Aorta (tissue), 5 donors: ENCODE measurements at regions of chr2 and their contacts with region 1.

Region 1: DNA sequence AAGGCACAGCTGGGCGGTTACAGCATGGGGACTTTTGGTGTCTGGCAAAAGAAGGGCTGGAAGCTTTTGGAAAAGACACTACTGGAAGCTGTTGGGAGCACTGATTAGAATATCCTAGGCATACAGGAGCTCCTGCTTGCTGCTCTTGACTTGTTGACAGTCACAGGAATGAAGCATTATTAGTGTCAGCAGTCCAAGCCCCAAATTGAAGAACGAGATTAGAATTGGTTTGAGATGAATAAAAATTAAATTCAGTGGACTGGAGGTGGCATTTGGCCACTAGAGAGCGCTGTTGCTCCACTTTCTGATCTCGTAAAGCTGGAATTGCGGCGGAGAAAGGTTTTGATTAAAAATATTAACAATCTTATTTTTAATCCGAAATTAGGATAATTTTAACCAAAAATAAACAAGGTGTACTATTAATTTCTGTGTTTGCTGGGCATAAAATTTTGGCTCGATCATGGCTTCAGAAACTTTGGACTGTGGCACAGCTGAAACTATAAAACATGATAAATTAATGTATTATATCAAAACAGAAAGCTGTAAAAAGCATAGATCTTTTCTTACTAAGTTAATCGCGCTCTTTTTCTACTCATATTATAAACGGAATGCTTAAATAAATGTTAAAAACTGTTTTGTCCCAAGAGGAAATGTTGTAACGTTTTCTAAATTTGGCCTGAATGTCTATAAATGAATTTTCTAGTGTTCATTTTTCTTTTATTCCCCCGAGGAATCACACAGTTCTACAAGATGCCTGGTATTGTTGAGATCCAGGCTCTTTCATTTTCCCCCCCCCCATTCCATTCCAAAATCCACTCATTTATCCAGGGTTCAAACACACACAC is 2.4 kb upstream of the HOXD8 start:
- DNase-seq: peak; percentile 73 to 85
- ATAC-seq: no peak
- H3K4me3 ChIP-seq: no peak overlapping the region
- H3K27ac ChIP-seq: no peak overlapping the region
- H3K4me1 ChIP-seq: no peaks in the 10 kb centered on the region
- H3K27me3 ChIP-seq: no peaks in the 10 kb centered on the region

Region 2: DNA sequence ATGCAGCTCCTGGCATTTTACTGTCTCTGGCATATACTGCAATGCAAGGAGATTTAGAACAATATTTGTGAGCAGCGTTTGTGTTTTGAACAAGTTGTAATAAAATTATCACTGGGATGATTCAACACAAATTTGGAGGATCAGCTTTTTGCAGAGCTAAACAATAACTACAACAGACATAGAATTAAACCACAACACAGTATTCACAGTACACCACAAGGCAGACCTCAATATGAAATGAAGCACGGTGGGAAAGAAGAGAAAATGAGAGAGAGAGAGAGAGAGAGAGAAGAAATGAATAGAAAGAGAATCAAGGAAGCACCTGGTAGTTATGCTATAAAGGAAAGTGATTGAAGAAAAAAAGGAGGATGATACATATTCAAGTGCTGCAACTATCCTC is 100.7 kb after region 1 on chr2:
- intact Hi-C with region 1: no loop called
- DNase-seq: no peak
- ATAC-seq: no peak
- H3K4me3 ChIP-seq: no peak overlapping the region
- H3K27ac ChIP-seq: no peak overlapping the region
- H3K4me1 ChIP-seq: no peaks in the 10 kb centered on the region
- H3K27me3 ChIP-seq: no peaks in the 10 kb centered on the region

Region 3: DNA sequence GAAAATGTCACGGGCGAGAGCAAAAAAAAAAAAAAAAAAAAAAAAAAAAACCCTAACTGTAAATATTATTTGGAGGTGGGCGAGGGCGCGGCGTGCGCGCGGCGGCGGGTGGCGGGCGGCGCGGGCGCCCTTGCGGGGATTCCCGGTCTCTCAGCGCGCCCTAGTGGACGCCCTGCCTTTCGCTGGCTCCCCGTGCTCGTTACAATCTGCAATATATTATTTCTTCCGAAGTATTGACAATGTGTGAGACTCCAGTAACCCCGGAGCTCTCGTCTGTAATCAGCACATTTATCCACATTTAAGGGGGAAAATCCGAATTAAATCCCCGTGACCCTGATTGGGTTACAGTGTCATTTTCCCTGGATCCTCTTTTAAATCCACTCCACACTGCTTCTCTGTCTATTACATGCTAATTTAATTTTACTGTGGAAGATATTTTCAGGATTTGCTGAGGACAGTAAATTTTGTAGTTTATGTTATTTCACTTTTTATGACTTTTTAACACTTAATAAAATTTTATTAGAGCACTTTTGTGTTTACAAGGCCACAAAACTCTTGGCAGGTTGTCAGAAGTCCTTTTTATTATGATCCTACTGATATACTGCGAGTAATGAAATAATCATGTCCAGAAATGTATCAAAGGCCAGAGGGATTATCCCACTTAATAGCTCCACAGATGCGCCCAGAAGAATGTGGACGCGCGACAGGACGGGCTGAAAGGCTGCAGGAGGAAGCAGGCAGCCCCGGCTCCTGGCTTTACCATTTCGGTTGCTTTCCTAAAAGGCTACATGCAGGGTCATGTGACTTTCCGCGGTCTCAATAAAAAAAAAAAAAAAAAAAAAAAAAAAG is 511.2 kb after region 1 on chr2:
- intact Hi-C with region 1: loop called (anchors 2 kb)
- DNase-seq: peak; percentile 77 to 94
- ATAC-seq: peak; percentile 94
- H3K4me3 ChIP-seq: peak overlapping the region; percentile 80 to 81
- H3K27ac ChIP-seq: no peak overlapping the region
- H3K4me1 ChIP-seq: no peaks in the 10 kb centered on the region
- H3K27me3 ChIP-seq: no peaks in the 10 kb centered on the region

Region 4: GRCh38 chr2:176653479-176654443 is 526.6 kb after region 1 on chr2:
- intact Hi-C with region 1: loop called (anchors 1 to 2 kb)
- DNase-seq: peak; percentile 67 to 82
- ATAC-seq: peak; percentile 89
- H3K4me3 ChIP-seq: no peak overlapping the region
- H3K27ac ChIP-seq: no peak overlapping the region
- H3K4me1 ChIP-seq: no peaks in the 10 kb centered on the region
- H3K27me3 ChIP-seq: no peaks in the 10 kb centered on the region

Region 5: GRCh38 chr2:176814306-176815052 is 687.3 kb after region 1 on chr2:
- intact Hi-C with region 1: loop called (anchors 5 kb)
- DNase-seq: no peak
- ATAC-seq: peak; percentile 69
- H3K4me3 ChIP-seq: no peak overlapping the region
- H3K27ac ChIP-seq: no peak overlapping the region
- H3K4me1 ChIP-seq: peaks cover 0 to 6% of the 10 kb centered on the region in 2 donors
- H3K27me3 ChIP-seq: no peaks in the 10 kb centered on the region

Region 6: DNA sequence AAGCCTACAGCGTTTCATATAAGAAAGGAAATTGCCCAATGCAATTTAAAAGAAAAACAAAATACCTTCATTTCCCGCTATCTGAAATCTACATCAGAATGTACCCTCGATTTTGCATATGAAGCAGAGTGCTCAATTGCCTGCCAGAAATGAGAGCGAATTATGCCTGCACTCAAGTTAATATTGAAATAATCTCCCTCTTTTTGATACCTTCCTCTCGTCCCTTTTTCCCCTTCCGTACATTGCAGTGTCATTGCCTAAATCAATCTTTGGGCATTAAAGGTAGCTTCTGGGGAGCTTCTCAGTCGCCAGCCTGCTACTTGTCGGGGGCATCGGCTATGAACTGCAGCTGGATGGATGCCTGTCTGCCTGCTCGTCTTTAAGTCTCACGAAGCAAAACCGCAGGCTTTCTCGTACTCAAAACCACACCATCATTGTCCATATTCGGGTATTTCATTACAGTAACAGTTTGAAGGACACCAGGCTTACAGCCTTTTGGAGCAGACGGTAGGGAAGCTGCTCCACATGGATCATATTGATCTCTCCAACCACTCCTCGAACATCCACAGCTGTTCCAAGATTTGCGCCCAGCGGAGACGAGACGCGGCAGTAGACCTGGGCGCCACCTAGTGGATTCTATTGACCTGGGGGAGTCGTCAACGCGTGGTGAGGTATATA is 1021.5 kb after region 1 on chr2:
- intact Hi-C with region 1: loop called in 1 of 2 experiments (anchors 5 kb)
- DNase-seq: peak; percentile 75 to 86
- ATAC-seq: peak; percentile 91
- H3K4me3 ChIP-seq: peak overlapping the region; percentile 37 to 41
- H3K27ac ChIP-seq: no peak overlapping the region
- H3K4me1 ChIP-seq: no peaks in the 10 kb centered on the region
- H3K27me3 ChIP-seq: peaks cover 0 to 5% of the 10 kb centered on the region in 2 donors